ENCODE measurements at regions of chr17 and their contacts with region 1.

Region 1: GRCh38 chr17:33520426-33521330 is 227.6 kb upstream of the ASIC2 start:
- DNase-seq: peak; percentile 20
- ATAC-seq: no peak
- H3K4me3 Mint-ChIP-seq: no peak overlapping the region
- H3K27ac Mint-ChIP-seq: no peak overlapping the region
- H3K4me1 Mint-ChIP-seq: no peaks in the 10 kb centered on the region
- H3K27me3 Mint-ChIP-seq: peaks cover 2% of the 10 kb centered on the region
- CTCF ChIP-seq: peak; percentile 22

Region 2: GRCh38 chr17:33072421-33073196 is 448.1 kb before region 1 on chr17:
- CTCF ChIA-PET with region 1: no interaction called
- POLR2A ChIA-PET with region 1: no interaction called
- intact Hi-C with region 1: no loop called
- DNase-seq: no peak
- ATAC-seq: no peak
- H3K4me3 Mint-ChIP-seq: no peak overlapping the region
- H3K27ac Mint-ChIP-seq: no peak overlapping the region
- H3K4me1 Mint-ChIP-seq: no peaks in the 10 kb centered on the region
- H3K27me3 Mint-ChIP-seq: peaks cover 12% of the 10 kb centered on the region
- CTCF ChIP-seq: no peak

Region 3: DNA sequence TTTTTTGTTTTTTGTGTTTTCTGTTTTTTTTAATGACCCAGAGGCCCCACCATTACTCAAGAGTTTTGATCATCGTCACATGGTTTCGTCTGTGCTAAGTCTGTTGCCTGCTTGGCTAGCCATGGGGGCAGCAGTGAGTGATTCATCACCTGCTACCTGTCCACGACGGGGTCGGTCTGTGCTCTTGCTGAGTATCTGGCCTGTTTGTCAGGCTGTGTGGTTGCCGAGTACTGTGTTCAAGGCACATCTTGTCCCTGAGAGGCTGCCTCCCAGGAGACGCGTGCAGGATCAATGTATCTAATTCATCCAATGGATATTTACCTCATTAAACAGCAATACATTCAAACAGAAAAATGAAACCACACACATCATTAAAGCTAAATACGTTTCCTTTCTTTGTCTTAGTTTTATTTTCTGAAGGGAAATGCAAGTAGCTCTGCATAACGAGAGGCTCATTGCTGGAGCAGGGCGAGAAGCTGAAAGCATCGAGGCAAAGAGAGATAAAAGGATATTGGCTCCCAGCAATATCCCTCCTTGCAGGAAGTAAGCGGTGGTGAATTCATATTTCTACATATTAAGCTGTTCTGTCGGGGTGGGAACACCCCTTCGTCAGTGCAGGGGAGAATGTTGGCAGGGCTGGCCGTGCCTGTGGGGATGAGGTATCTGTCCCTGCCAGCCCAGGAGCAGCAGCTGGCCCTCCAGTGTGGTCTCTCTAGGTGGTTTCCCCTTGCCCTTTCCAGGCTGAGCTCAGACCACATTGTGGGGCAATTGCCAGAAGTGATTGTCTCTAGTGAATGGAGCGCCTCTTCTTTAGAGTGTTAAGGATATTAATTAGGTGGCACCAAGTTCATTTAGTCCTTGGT is 61.4 kb before region 1 on chr17:
- CTCF ChIA-PET with region 1: no interaction called
- POLR2A ChIA-PET with region 1: no interaction called
- intact Hi-C with region 1: no loop called
- DNase-seq: no peak
- ATAC-seq: no peak
- H3K4me3 Mint-ChIP-seq: no peak overlapping the region
- H3K27ac Mint-ChIP-seq: no peak overlapping the region
- H3K4me1 Mint-ChIP-seq: no peaks in the 10 kb centered on the region
- H3K27me3 Mint-ChIP-seq: peaks cover 8% of the 10 kb centered on the region
- CTCF ChIP-seq: no peak

Region 4: GRCh38 chr17:33562792-33563191 is 42.1 kb after region 1 on chr17:
- CTCF ChIA-PET with region 1: no interaction called
- POLR2A ChIA-PET with region 1: no interaction called
- intact Hi-C with region 1: no loop called
- DNase-seq: no peak
- ATAC-seq: no peak
- H3K4me3 Mint-ChIP-seq: no peak overlapping the region
- H3K27ac Mint-ChIP-seq: no peak overlapping the region
- H3K4me1 Mint-ChIP-seq: no peaks in the 10 kb centered on the region
- H3K27me3 Mint-ChIP-seq: no peaks in the 10 kb centered on the region
- CTCF ChIP-seq: no peak

Region 5: DNA sequence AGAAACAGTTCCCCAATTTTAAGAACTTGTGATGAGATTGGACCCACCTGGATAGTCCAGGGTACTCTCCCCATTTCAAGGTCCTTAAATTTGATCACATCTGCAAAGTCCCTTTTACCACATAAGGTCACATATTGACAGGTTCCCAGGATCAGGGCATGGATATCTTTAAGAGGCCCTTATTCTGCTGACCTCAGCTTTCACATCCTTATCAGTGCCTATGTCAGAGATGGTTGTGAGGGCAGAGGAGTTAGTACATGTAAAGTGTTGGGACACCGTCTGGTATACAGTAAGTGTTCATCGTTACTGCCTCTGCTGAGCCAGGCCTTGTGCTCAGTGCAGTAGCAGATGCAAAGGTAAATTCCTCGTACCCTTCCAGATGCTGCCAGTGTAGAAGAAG is 147.8 kb after region 1 on chr17:
- CTCF ChIA-PET with region 1: no interaction called
- POLR2A ChIA-PET with region 1: interaction called, 13 read pairs
- intact Hi-C with region 1: no loop called
- DNase-seq: no peak
- ATAC-seq: no peak
- H3K4me3 Mint-ChIP-seq: no peak overlapping the region
- H3K27ac Mint-ChIP-seq: no peak overlapping the region
- H3K4me1 Mint-ChIP-seq: peaks cover 12% of the 10 kb centered on the region
- H3K27me3 Mint-ChIP-seq: no peaks in the 10 kb centered on the region
- CTCF ChIP-seq: no peak

Region 6: DNA sequence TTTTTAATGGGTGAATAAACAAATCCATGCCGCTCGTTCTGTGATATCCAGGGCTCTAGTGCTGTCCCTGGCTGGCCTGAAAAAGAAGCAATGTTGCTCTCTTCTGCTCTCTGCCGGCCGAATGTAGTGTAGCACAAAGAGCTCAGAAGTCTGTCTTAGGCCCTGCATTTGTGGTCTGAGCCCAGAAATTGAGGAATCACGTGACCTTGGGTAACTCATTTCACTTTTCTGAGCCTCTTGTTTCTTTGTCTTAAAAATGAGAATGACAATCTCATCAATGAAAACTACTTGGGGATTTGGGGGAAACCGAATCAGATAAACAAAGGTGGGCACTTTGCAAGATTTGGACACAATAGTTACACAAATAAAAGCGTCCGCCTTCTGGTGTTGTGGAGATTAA is 154.0 kb after region 1 on chr17:
- CTCF ChIA-PET with region 1: interaction called, 5 read pairs
- POLR2A ChIA-PET with region 1: no interaction called
- intact Hi-C with region 1: loop called (anchors 1 kb)
- DNase-seq: no peak
- ATAC-seq: peak; percentile 54
- H3K4me3 Mint-ChIP-seq: no peak overlapping the region
- H3K27ac Mint-ChIP-seq: no peak overlapping the region
- H3K4me1 Mint-ChIP-seq: no peaks in the 10 kb centered on the region
- H3K27me3 Mint-ChIP-seq: peaks cover 2% of the 10 kb centered on the region
- CTCF ChIP-seq: no peak

Measured in activated B cell treated with CpG ODN at 0.5 μM for 24 hours (primary cell).